HEK293 (cell line): ENCODE measurements at regions of chr11 and their contacts with region 1.

Region 1: GRCh38 chr11:99739464-99740089 is 718.8 kb downstream of the CNTN5 start:
- H3K4me3 ChIP-seq: no peak overlapping the region
- H3K27ac ChIP-seq: no peak overlapping the region
- H3K4me1 ChIP-seq: no peaks in the 10 kb centered on the region
- CTCF ChIP-seq: no peak

Region 2: DNA sequence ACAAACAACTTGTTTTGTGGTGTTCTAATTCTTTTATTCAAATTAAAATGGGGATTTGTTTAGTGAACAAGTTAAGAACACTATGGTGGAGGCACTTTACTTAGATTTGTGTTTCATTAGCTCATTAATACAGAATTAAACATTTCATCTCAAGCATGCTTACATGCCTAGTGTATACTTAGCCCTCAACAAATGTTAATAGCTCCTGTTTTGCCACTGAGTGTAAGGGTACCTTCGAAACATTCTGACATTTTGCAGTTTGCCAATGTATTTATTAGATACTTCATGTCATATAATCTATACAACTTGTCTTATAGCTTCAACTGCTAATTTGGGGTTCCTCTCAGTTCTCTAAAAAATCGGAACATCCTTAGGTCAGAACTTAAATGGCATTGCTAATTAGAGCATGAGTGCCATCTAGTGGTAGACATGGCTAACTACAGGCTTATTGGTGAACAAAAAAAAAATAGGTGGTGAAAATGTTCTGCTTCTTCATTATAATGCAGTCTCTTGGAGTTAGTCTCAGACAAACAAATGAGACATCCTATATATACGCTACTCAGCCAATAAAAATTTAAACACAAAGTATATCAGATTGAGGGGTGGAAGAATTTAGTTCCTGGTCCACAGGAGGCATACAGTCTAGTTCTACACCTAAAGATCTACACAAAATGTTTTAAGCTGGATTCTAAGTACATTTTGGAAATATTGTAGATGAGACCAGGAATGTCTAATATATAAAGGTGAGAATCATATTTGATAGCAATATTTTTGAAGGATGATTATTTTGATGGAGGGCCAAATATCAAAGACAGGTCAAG is 723.7 kb before region 1 on chr11:
- CTCF ChIA-PET with region 1: interaction called, 16 read pairs
- POLR2A ChIA-PET with region 1: no interaction called
- H3K4me3 ChIP-seq: no peak overlapping the region
- H3K27ac ChIP-seq: no peak overlapping the region
- H3K4me1 ChIP-seq: no peaks in the 10 kb centered on the region
- CTCF ChIP-seq: peak; percentile 26; the same call in 1 of the 2 replicates

Region 3: GRCh38 chr11:99759787-99760186 is 20.2 kb after region 1 on chr11:
- CTCF ChIA-PET with region 1: no interaction called
- POLR2A ChIA-PET with region 1: no interaction called
- H3K4me3 ChIP-seq: no peak overlapping the region
- H3K27ac ChIP-seq: no peak overlapping the region
- H3K4me1 ChIP-seq: no peaks in the 10 kb centered on the region
- CTCF ChIP-seq: no peak